Tibial artery (tissue), 4 donors: ENCODE measurements at regions of chr16 and their contacts with region 1.

Region 1: GRCh38 chr16:11345040-11345862 is at the start of gene RMI2:
- DNase-seq: peak; percentile 94 to 97
- H3K4me3 ChIP-seq: peak within 1 kb of the TSS; percentile 48 to 62
- H3K27ac ChIP-seq: no peak within 1 kb of the TSS
- H3K4me1 ChIP-seq: peaks cover 3 to 24% (median 13%) of the 10 kb centered on the region in 4 donors
- H3K27me3 ChIP-seq: no peaks in the 10 kb centered on the region
- CTCF ChIP-seq: peak in 1 of 2 experiments; percentile 24

Region 2: DNA sequence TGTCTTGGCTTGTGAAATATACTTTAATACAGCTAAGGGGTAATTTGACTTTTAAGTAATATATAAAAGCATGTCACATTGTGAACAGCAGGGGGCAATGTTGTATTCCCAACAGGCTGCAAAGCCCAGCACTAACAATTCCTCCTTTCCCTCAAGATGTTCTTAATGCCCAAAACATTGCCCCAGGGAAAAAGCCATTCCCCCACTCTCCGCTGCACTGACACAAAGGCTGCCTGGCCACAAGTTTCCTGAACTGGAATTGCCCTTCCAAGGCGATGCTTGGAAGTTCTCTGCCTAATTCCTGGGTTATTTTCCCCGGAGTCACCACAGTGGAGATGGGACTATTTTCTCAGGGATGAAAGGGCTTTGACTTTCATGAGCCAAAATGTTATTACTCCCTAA is 373.7 kb before region 1 on chr16:
- intact Hi-C with region 1: loop called (anchors 10 kb)
- DNase-seq: peak; percentile 60 to 72
- H3K4me3 ChIP-seq: no peak overlapping the region
- H3K27ac ChIP-seq: peak overlapping the region; percentile 47 to 49
- H3K4me1 ChIP-seq: peaks cover 0 to 26% (median 12%) of the 10 kb centered on the region in 4 donors
- H3K27me3 ChIP-seq: no peaks in the 10 kb centered on the region
- CTCF ChIP-seq: peak; percentile 79 to 91

Region 3: DNA sequence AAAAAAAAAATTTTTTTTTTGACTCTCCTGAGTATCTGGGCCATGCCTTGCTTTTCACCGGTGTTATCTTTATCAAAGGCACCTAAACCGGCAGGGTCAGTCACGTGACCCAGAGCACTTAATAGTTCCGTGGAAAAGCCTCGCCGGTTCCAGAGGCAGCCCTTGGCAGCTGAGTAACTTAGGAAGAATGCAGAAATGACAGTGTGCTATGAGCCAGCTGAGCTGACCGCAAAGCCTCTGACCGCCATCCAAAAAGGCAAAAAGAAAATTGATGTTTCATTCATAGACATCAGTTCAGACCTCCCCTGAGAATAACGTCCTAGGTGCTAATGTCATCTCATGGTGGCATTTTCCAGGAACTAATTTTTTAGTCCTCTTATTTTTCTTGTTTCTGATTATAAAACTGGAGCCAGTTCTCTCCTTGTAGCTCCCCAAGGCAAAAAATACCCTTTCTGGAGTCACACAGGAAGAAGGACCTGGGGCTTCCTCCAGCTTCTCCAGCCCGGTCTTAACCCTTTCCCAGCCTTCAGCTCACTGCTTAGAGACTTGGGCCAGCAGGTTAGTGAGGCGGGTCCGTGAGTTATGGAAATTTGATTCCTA is 211.8 kb before region 1 on chr16:
- intact Hi-C with region 1: loop called (anchors 10 kb)
- DNase-seq: peak; percentile 82 to 89
- H3K4me3 ChIP-seq: no peak overlapping the region
- H3K27ac ChIP-seq: peak overlapping the region; percentile 45 to 56
- H3K4me1 ChIP-seq: peaks cover 0 to 83% (median 46%) of the 10 kb centered on the region in 4 donors
- H3K27me3 ChIP-seq: no peaks in the 10 kb centered on the region
- CTCF ChIP-seq: no peak

Region 4: GRCh38 chr16:11535471-11535870 is 190.2 kb after region 1 on chr16:
- intact Hi-C with region 1: no loop called
- DNase-seq: no peak
- H3K4me3 ChIP-seq: no peak overlapping the region
- H3K27ac ChIP-seq: no peak overlapping the region
- H3K4me1 ChIP-seq: peaks cover 0 to 13% (median 8%) of the 10 kb centered on the region in 4 donors
- H3K27me3 ChIP-seq: no peaks in the 10 kb centered on the region
- CTCF ChIP-seq: no peak